AG04450 (cell line): ENCODE measurements at regions of chr16 and their contacts with region 1.

Region 1: GRCh38 chr16:30445408-30446202 is at the start of gene SEPHS2:
- DNase-seq: peak; percentile 92
- H3K4me3 ChIP-seq: peak within 1 kb of the TSS; percentile 83
- H3K27ac ChIP-seq: peak within 1 kb of the TSS; percentile 86
- H3K27me3 ChIP-seq: peaks cover 4% of the 10 kb centered on the region
- CTCF ChIP-seq: peak; percentile 54
- polyA plus RNA-seq, gene SEPHS2: 41.2 and 47.1 TPM in 2 replicates

Region 2: DNA sequence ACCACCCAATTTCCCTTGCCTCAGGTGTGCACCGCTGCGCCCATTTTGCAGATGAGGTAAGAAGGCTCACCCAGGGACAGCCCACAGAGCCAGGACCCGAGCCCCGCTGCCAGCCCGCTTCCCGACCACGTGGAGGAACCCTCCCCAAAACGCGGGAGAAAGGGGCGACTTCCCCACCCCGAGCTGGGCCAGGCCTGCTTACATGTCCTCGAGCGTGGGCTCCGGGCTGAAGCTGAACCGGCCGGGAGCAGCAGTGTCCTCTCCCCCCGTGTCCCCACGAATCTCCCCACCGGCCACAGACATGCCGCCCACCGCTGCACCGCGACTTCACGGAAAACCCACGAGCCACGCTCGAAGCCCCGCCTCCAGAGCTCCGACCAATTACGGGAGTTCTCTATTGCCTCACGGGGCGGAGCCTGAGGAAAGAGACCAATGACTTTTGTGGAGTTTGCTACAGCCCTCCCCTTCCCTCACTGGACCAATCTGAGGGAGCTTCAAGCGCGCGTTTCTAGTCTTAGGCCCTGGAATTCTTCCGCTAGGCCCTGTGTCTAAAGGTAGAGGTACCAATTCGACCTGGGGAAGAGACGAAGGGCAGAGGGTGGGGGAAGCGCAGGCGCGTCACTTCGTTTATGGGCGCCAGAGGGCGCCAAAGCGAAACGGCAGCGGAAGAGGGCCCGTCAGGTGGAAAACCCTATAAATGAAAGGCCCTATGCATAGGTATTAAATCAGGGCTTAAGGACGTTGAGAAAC is 15.8 kb before region 1 on chr16 and contains the start of gene DCTPP1:
- CTCF ChIA-PET with region 1: interaction called, 10 read pairs
- POLR2A ChIA-PET with region 1: no interaction called
- DNase-seq: peak; percentile 91
- H3K4me3 ChIP-seq: peak within 1 kb of the TSS; percentile 93
- H3K27ac ChIP-seq: no peak within 1 kb of the TSS
- H3K27me3 ChIP-seq: no peaks in the 10 kb centered on the region
- CTCF ChIP-seq: peak; percentile 71
- polyA plus RNA-seq, gene DCTPP1: 34.1 and 34.7 TPM in 2 replicates

Region 3: DNA sequence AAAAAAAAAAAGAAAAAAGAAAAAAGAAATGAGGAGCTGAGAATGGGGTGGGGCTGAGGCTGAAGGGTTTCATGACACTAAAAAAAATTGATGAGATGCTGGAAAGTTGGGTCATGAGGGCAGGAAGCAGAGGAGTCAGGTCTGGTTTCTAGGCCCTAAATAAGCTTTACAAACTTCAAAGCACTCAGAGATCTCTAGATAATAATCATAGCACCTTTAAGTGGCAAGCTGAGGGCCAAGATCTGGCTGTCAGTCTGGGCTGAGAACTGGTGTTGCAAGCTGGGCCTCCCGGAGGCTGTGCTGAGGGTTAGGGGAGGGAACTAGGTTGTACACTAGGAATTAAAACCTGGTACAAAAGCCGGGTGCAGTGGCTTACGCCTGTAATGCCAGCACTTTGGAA is 106.2 kb after region 1 on chr16:
- CTCF ChIA-PET with region 1: interaction called, 12 read pairs
- POLR2A ChIA-PET with region 1: no interaction called
- DNase-seq: no peak
- H3K4me3 ChIP-seq: no peak overlapping the region
- H3K27ac ChIP-seq: no peak overlapping the region
- H3K27me3 ChIP-seq: no peaks in the 10 kb centered on the region
- CTCF ChIP-seq: no peak

Region 4: DNA sequence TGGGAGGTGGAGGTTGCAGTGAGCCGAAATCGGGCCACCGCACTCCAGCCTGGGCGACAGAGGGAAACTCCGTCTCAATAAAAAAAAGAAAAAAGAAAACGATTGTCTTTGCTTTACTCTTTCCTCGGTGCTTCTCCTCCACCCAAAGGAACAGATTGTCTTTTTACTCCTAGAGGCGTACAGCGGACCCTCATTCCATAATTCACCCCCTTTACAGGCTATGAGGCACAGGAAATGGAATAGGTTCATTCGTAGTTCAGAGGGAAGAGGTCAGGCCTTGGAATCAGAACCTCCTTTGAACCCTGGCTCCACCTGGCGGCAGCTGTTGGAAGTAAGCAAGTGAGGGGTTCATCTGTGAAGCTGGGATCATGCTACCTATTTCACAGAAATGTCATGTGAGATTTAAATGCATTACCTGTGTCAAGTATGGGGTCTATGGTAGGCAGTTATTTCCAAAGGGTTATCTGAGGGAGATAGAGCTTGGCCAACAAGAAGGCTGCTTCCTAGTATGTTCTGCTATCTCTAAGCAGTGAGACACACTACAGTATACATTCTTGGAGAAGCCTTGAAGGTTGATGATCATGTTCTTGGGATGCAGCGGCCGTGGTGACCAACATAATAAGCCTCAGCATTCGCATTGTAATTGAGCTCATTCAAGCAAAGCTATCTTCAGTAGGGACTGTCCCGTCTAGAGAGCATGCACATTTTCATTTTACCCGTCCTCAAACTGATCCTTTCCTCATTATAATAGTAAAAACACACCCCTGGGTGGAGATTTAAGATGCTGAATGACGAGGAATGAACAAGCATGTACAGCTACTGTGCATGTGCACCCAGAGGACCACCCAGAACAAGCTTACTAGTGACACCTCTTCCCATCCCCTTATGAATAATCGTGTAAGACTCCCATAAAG is 183.3 kb after region 1 on chr16:
- CTCF ChIA-PET with region 1: interaction called, 36 read pairs
- POLR2A ChIA-PET with region 1: no interaction called
- DNase-seq: peak; percentile 43
- H3K4me3 ChIP-seq: no peak overlapping the region
- H3K27ac ChIP-seq: no peak overlapping the region
- H3K27me3 ChIP-seq: peaks cover 5% of the 10 kb centered on the region
- CTCF ChIP-seq: peak; percentile 94

Region 5: DNA sequence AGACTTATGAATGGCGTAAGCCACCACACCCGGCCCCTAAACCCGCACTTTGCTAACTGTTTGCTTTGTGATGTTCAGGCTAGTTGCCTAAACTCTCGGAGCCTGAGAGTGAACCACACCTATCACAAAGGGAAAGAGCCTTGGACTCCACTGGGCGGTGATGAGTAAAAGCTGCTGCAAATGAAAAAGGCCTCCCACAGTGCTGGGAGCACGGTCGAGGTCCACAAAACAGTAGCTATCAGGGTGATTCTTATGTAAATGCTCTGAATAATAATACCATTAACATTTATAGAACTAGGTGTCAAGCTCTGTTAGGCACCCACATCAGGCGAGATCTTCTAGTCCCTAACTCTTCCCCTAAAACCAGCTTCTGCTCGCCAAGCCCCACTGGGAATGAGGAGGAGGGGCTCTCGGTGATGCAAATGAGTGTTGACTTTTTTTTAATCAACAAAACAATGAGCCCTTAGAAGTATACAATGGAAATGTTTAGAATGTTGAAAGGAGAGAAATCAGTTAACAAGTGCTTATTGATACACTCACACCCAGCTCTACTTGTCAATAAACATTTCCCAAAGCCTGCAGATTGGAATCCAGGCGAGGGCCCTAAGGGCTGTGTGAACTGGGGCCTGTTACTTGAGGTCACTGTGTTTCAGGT is 232.5 kb after region 1 on chr16:
- CTCF ChIA-PET with region 1: no interaction called
- POLR2A ChIA-PET with region 1: interaction called, 14 read pairs
- DNase-seq: no peak
- H3K4me3 ChIP-seq: no peak overlapping the region
- H3K27ac ChIP-seq: no peak overlapping the region
- H3K27me3 ChIP-seq: no peaks in the 10 kb centered on the region
- CTCF ChIP-seq: no peak